Mammary epithelial cell (primary cell): ENCODE measurements at regions of chr7 and their contacts with region 1.

Region 1: DNA sequence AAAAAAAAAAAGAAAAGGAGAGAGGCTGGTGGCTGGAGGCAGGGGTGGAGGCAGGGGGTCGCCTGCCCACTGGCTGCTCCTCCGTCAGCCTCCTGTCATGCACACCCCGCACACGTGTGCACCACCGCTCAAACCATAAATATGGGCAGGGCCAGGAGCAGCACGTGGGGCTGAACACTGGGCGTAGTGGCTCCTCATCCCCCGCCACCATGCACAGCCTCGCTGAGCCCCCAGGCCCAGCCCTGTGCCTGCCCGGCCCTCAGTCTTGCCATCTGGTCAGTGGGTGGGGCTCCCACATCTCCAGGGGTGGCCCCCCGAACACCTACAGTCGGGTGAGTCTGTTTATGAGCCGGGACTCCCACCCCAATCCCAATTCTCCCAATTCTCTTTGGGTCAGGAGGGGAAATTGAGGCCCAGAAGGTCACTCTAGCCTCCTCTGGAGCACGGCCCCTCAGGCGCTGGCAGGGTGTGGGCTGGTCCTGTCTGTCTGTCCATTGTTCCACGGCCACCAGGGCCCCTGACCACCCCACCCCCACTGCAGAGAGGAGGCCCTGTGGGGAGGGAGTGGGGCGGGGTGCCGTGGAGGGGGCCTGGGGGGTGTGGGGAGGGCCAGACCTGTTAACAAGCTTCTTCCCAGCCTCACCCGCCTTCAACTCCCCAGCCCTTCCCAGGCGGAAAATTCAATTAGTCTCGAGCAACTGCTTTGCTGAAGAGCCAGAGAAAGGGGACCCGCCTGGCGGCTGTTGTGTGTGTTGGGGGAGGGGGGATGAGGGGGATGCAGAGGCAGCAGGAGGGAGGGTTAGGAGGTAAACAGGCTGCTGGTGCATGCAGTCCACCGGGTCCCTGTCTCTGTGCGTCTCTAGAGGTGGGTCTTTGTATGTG is 19.5 kb upstream of the GRIFIN start:
- DNase-seq: no peak
- H3K4me3 ChIP-seq: no peak overlapping the region
- H3K27ac ChIP-seq: no peak overlapping the region
- H3K4me1 ChIP-seq: no peaks in the 10 kb centered on the region
- H3K27me3 ChIP-seq: no peaks in the 10 kb centered on the region
- CTCF ChIP-seq: no peak

Region 2: DNA sequence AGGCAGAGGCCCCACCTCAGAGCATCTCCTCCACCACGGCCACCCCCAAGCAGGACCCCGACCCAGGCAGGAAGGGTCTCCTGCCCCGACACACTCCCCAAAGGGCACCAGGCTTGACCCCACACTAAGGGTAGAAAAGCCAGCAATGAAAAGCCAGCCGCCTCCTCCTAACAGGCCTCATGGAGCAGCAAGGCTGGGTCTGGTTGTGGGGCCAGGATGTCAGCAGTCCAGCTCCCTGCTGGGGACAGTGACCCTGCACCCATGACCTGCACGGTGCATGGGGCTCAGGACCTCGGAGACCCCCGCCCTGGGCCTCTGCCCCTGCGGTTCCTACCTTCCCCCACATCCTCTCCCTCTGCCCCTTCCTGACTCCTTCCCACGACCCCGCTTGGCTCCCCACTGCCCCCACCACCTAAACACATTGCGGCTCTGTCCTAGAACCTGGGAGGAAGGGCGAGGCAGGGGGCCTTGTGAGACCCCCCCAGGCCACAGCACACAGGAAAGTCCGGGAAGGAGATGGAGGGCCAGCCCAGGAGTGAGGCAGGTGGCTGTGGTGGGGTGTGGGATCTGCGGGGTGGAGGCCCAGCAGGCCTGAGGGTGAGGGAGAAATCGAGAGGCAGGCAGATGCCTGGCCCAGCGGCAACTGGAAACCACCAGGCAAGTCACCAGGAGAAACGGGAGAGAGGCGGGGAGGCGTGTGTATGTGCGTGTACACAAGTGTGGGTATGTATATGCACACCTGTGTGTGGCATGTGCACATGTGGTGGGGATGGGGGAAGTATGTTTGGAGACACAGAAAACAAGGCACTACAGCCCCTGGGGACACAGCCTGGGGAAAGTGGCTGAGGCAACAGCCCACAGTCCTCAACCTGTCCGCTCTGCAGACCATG is 492.9 kb before region 1 on chr7:
- CTCF ChIA-PET with region 1: no interaction called
- dilution Hi-C with region 1: no loop called
- in situ Hi-C with region 1: no loop called
- intact Hi-C with region 1: no loop called
- DNase-seq: no peak
- H3K4me3 ChIP-seq: no peak overlapping the region
- H3K27ac ChIP-seq: no peak overlapping the region
- H3K4me1 ChIP-seq: peaks cover 3% of the 10 kb centered on the region
- H3K27me3 ChIP-seq: no peaks in the 10 kb centered on the region
- CTCF ChIP-seq: no peak

Region 3: DNA sequence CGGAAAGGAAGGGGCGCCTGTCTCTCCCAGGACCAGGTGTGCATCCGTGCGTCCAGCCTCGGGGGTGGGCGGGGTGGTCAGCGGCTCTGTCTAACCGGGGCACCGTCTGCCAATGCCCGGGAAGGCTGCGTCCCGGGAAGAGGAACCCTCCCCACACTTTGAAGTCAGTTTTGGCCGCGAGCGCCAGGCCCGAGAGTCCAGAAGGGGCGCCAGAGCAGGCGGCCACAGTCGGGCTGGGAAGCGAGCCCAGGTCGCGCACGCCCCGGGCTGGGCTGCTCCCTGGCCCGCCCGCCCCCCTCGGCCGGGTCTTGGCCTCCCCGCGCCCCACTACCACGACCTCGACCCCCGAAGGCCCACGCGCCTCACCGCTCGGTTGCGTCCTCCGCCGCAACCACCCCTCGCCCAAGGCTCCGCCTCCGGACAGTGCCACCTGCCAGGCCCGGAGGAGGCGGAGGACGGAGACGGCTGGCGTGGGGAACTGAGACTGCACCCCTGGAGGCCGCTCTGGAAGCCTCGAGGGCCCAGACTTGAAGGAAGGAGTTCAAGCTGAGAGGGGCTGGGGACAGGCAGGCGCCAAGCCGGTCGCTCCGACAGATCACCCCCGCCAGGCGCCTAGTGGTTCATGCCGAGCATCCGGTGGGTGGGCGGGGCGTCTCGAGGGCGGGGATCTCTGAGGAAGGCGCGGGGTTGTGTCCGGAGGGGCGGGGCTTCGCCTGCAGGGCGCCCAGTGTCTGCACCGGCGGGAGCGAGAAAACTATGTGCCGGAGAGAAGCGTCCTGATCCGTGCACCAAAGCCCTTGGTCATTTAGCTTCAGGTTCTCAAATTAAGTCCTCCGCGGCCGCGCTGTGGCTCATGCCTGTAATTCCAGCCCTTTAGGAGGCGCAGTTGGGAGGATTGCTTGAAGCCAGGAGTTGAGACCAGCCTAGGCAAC is 59.7 kb after region 1 on chr7 and contains the start of gene BRAT1:
- CTCF ChIA-PET with region 1: no interaction called
- dilution Hi-C with region 1: loop called (anchors 5 kb)
- in situ Hi-C with region 1: no loop called
- intact Hi-C with region 1: no loop called
- DNase-seq: peak; percentile 88
- H3K4me3 ChIP-seq: peak within 1 kb of the TSS; percentile 82 to 97 (median 91)
- H3K27ac ChIP-seq: peak within 1 kb of the TSS; percentile 97
- H3K4me1 ChIP-seq: peaks cover 10% of the 10 kb centered on the region
- H3K27me3 ChIP-seq: no peaks in the 10 kb centered on the region
- CTCF ChIP-seq: peak; percentile 23 to 57
- total RNA-seq, gene BRAT1: 20.5 to 25.3 TPM

Region 4: DNA sequence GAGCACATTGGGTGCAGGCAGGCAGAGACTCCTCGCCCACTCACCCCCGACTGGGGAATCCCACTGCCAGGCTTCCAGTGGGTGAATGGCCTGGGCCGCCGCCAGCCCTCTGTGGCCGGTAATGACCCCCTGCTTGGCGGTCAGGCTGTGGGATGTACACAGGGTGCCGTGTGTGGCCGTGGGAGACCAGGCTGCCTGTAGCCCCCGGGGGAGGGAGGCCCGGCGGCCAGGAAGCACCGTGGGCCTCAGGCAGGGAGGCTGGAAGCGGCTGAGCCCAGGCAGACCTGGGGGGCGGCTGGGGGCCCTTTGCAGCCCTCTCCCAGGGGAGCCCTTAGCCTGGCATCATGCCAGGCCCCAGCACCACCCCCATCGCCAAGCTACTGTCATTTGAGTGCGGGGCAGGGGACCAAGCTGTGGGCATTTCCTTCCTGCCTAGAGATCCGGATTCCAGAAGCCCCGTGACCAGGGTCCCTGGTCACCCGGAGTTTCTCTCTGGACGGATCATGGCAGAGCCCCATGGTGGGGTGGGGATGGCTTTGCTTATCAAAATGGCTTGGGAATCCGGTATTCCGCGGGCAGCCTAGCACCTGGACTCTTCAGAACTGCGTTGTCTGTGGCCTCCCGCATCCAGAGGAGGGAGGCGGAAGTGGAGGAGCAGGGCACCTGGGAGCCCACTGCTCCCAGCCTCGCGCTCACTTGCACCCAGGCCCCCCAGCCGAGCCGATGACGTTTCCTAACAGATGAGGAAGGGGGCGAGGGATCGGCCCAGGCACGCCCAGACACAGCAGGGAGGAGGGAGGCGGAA is 137.3 kb after region 1 on chr7:
- CTCF ChIA-PET with region 1: no interaction called
- dilution Hi-C with region 1: loop called (anchors 10 kb)
- in situ Hi-C with region 1: no loop called
- intact Hi-C with region 1: no loop called
- DNase-seq: peak; percentile 58
- H3K4me3 ChIP-seq: peak overlapping the region; percentile 65 to 88 (median 68)
- H3K27ac ChIP-seq: peak overlapping the region; percentile 59
- H3K4me1 ChIP-seq: peaks cover 35% of the 10 kb centered on the region
- H3K27me3 ChIP-seq: no peaks in the 10 kb centered on the region
- CTCF ChIP-seq: no peak

Region 5: GRCh38 chr7:2698581-2699288 is 203.1 kb after region 1 on chr7:
- CTCF ChIA-PET with region 1: no interaction called
- dilution Hi-C with region 1: no loop called
- in situ Hi-C with region 1: no loop called
- intact Hi-C with region 1: no loop called
- DNase-seq: no peak
- H3K4me3 ChIP-seq: no peak overlapping the region
- H3K27ac ChIP-seq: no peak overlapping the region
- H3K4me1 ChIP-seq: no peaks in the 10 kb centered on the region
- H3K27me3 ChIP-seq: no peaks in the 10 kb centered on the region
- CTCF ChIP-seq: no peak